HepG2 (cell line): ENCODE measurements at regions of chr6 and their contacts with region 1.

Region 1: GRCh38 chr6:160930547-160931377 is 60.8 kb upstream of the MAP3K4 start:
- DNase-seq: peak; percentile 30
- ATAC-seq: peak; percentile 95
- H3K4me3 ChIP-seq: peak overlapping the region; percentile 52 to 77 (median 54); a peak in 5 of 6 replicates
- H3K27ac ChIP-seq: no peak overlapping the region
- H3K4me1 ChIP-seq: peaks cover 10% of the 10 kb centered on the region
- H3K27me3 ChIP-seq: peaks cover 0 to 5% of the 10 kb centered on the region in 2 experiments; a peak in 3 of 5 replicates
- CTCF ChIP-seq: peak; percentile 99
- EP300 ChIP-seq: no peak
- POLR2A ChIP-seq: no peak
- RAD21 ChIP-seq: peak; percentile 93

Region 2: GRCh38 chr6:160733050-160733646 is 197.6 kb before region 1 on chr6:
- CTCF ChIA-PET with region 1: no interaction called
- POLR2A ChIA-PET with region 1: no interaction called
- in situ Hi-C with region 1: no loop called
- intact Hi-C with region 1: loop called (anchors 5 kb)
- DNase-seq: peak; percentile 47
- ATAC-seq: peak; percentile 86
- H3K4me3 ChIP-seq: no peak overlapping the region
- H3K27ac ChIP-seq: no peak overlapping the region
- H3K4me1 ChIP-seq: no peaks in the 10 kb centered on the region
- H3K27me3 ChIP-seq: no peaks in the 10 kb centered on the region
- CTCF ChIP-seq: peak; percentile 86
- EP300 ChIP-seq: no peak
- POLR2A ChIP-seq: no peak
- RAD21 ChIP-seq: peak; percentile 53

Region 3: GRCh38 chr6:160992061-160992979 is 61.6 kb after region 1 on chr6:
- CTCF ChIA-PET with region 1: interaction called, 7 read pairs
- POLR2A ChIA-PET with region 1: interaction called, 3 read pairs
- in situ Hi-C with region 1: no loop called
- intact Hi-C with region 1: loop called (anchors 1 kb)
- DNase-seq: peak; percentile 79
- ATAC-seq: peak; percentile 71
- H3K4me3 ChIP-seq: peak overlapping the region; percentile 94 to 96 (median 96)
- H3K27ac ChIP-seq: peak overlapping the region; percentile 89
- H3K4me1 ChIP-seq: peaks cover 25% of the 10 kb centered on the region
- H3K27me3 ChIP-seq: peaks cover 0 to 13% of the 10 kb centered on the region in 2 experiments; a peak in 2 of 5 replicates
- CTCF ChIP-seq: peak; percentile 82
- EP300 ChIP-seq: no peak
- POLR2A ChIP-seq: peak in 1 of 2 experiments; percentile 52; a peak in 2 of 4 replicates
- RAD21 ChIP-seq: peak; percentile 17; the same call in 1 of the 2 replicates

Region 4: DNA sequence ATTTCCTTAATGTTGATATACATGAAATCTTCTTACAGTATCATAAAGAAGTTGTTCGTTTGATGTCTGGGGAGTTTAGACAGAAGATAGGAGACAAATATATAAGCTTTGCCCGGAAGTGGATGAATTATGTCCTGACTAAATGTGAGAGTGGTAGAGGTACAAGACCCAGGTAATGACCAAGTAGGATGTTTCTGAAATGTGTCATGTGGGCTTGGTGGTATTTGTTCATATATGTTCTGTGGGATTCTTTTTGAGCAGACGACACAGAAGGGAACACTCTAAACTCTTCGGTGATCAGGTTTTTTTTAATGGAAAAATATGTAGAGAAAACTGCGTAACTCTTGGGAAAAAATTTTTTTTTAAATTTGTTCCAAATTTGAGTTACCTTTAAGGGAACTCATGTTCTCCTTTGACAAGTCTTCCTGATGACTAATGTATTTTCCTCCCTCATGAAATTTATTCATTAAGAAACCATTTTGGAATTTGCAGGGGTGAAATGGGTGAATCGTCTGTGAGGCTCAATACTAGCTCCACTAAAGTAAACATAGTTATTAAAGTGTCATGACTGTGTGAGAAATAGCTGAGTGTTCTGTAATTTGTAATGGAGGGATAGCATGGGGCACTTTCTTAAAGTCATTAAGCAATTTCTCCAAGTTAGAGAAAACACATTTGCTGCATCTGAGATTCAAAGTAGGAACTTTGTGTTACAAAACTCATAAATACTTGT is 161.4 kb after region 1 on chr6:
- CTCF ChIA-PET with region 1: no interaction called
- POLR2A ChIA-PET with region 1: no interaction called
- in situ Hi-C with region 1: no loop called
- intact Hi-C with region 1: loop called (anchors 10 kb)
- DNase-seq: no peak
- ATAC-seq: no peak
- H3K4me3 ChIP-seq: no peak overlapping the region
- H3K27ac ChIP-seq: no peak overlapping the region
- H3K4me1 ChIP-seq: no peaks in the 10 kb centered on the region
- H3K27me3 ChIP-seq: no peaks in the 10 kb centered on the region
- CTCF ChIP-seq: no peak
- EP300 ChIP-seq: no peak
- POLR2A ChIP-seq: no peak
- RAD21 ChIP-seq: no peak

Region 5: DNA sequence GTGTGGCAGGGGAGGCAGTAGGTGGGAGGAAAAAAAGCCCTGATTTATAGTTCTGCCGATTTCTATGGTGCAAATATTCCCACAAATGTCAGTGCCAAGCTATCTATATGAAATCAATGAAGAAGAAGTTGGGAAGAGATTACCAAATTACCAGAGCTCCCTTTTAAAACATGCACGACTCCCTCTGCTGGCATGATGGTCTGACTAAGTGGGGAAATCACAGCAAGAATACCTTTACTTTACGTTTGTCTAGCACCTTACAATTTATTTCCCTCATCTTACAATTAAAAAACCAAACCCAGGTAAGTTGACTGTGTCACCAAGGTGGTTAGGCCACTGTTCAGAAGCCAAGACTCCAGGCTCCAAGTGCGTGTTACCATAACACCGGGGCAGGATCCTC is 287.5 kb after region 1 on chr6:
- CTCF ChIA-PET with region 1: no interaction called
- POLR2A ChIA-PET with region 1: no interaction called
- in situ Hi-C with region 1: no loop called
- intact Hi-C with region 1: loop called (anchors 1 kb)
- DNase-seq: no peak
- ATAC-seq: peak; percentile 35; the same call in 2 of the 3 replicates
- H3K4me3 ChIP-seq: no peak overlapping the region
- H3K27ac ChIP-seq: no peak overlapping the region
- H3K4me1 ChIP-seq: peaks cover 4% of the 10 kb centered on the region; the same call in 1 of the 2 replicates
- H3K27me3 ChIP-seq: peaks cover 0 to 12% of the 10 kb centered on the region in 2 experiments; a peak in 1 of 5 replicates
- CTCF ChIP-seq: peak; percentile 28
- EP300 ChIP-seq: no peak
- POLR2A ChIP-seq: no peak
- RAD21 ChIP-seq: no peak